ENCODE measurements at regions of chr11 and their contacts with region 1.

Region 1: DNA sequence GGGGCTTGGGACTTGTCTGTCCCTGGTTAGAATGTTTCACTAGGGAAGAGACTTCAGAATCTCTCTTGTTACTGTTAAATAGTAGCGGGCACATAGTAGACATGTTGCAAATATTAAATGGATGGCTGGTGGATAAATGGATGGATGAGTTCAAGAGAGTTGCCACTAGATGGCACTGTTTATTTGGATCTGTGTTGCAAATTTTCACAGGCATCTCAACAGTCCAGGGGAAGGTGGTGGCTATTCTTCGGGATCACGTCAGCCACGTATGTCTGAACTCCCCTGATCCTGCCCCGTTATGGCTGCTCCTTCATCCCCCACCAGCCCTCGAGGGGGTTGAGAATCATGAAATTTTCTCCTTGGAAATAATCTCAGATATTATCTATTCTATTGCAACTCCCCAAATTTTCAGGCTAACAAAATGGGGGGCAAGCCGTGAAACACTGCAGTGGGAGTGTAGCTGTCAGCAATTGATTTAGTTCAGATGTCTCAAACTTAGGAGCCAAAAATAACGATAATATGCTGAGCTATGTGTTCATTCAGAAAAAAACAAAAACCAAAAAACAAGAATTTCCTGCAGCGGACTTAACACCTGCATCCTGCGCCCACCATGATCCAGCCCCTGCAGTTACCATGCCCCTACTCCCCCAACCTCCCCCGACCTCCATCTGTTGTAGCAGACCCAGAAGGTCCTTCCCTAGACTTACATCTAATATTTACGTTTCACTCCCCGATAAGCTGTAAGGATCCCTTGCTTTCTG is 29.1 kb upstream of the BIRC3 start:
- DNase-seq: peak in 1 of 2 donors; percentile 72
- H3K4me3 ChIP-seq: peak overlapping the region; percentile 30 to 54
- H3K27ac ChIP-seq: peak overlapping the region in 1 of 2 donors; percentile 41
- H3K4me1 ChIP-seq: peaks cover 11 to 21% of the 10 kb centered on the region in 2 donors
- H3K27me3 ChIP-seq: no peaks in the 10 kb centered on the region
- CTCF ChIP-seq: peak; percentile 54 to 77 (median 75)

Region 2: GRCh38 chr11:102317099-102317767 is 29.1 kb after region 1 on chr11 and contains the start of gene BIRC3:
- intact Hi-C with region 1: loop called (anchors 2 kb)
- DNase-seq: peak; percentile 80 to 94
- H3K4me3 ChIP-seq: peak within 1 kb of the TSS; percentile 54 to 76
- H3K27ac ChIP-seq: peak within 1 kb of the TSS; percentile 61 to 68
- H3K4me1 ChIP-seq: peaks cover 0 to 5% of the 10 kb centered on the region in 2 donors
- H3K27me3 ChIP-seq: no peaks in the 10 kb centered on the region
- CTCF ChIP-seq: peak; percentile 34 to 36 (median 34)
- total RNA-seq, gene BIRC3: 2.8 TPM

Region 3: DNA sequence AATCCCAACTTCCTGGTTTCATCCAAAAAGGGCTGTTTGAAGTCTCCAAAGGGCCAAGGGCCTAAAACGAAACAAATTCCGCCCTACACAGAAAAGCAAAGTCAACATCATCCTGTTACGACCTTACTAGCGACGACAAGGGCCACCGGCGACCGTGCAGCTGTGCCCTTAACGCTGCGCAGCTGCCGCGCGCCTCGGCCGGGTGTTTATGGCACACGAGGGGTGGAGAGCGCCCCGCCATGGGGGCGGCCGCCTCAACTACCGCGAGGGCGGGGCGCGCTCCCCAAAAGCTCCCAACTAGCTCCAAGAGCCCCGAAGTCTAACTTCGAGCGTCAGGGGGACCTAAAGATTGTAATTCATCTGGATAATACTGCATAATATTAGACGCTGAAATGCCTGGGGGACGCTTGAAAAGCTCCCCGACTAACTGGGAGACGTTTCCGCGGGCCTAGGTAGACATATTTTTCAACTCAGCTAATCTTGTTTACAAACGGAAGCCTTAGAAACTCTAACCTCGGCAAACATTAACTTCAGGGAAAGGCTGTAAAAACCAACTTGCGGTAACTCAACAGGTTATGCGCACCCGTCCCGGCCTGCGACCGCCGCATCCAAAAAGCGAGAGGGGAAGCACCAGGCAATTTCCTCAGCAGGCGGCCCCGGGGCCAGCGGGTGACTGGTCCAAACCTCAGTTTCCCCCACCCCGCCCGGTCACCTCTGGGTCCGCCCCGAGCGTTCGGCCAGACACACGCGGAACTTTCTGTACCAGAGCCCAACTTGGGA is 163.7 kb after region 1 on chr11:
- intact Hi-C with region 1: loop called (anchors 5 kb)
- DNase-seq: peak in 1 of 2 donors; percentile 73
- H3K4me3 ChIP-seq: peak overlapping the region; percentile 93 to 94
- H3K27ac ChIP-seq: peak overlapping the region; percentile 80 to 81
- H3K4me1 ChIP-seq: peaks cover 0 to 5% of the 10 kb centered on the region in 2 donors
- H3K27me3 ChIP-seq: no peaks in the 10 kb centered on the region
- CTCF ChIP-seq: peak in 1 of 3 experiments; percentile 28

Region 4: GRCh38 chr11:102495161-102496042 is 207.3 kb after region 1 on chr11:
- intact Hi-C with region 1: loop called (anchors 2 kb)
- DNase-seq: no peak
- H3K4me3 ChIP-seq: no peak overlapping the region
- H3K27ac ChIP-seq: no peak overlapping the region
- H3K4me1 ChIP-seq: no peaks in the 10 kb centered on the region
- H3K27me3 ChIP-seq: no peaks in the 10 kb centered on the region
- CTCF ChIP-seq: peak; percentile 38 to 66 (median 54)

Region 5: GRCh38 chr11:102666331-102666957 is 378.3 kb after region 1 on chr11:
- intact Hi-C with region 1: loop called (anchors 5 kb)
- DNase-seq: no peak
- H3K4me3 ChIP-seq: no peak overlapping the region
- H3K27ac ChIP-seq: no peak overlapping the region
- H3K4me1 ChIP-seq: no peaks in the 10 kb centered on the region
- H3K27me3 ChIP-seq: no peaks in the 10 kb centered on the region
- CTCF ChIP-seq: peak; percentile 47 to 68 (median 57)

Measured in ascending aorta (tissue), 2 donors.